Calu3 (cell line): ENCODE measurements at regions of chr3 and their contacts with region 1.

Region 1: GRCh38 chr3:172595641-172596393 is 72.6 kb upstream of the TNFSF10 start:
- DNase-seq: peak; percentile 67
- H3K4me3 Mint-ChIP-seq: peak overlapping the region; percentile 70
- H3K27ac Mint-ChIP-seq: peak overlapping the region; percentile 95
- H3K4me1 Mint-ChIP-seq: peaks cover 68% of the 10 kb centered on the region
- H3K27me3 Mint-ChIP-seq: no peaks in the 10 kb centered on the region
- CTCF ChIP-seq: peak; percentile 83

Region 2: GRCh38 chr3:172461530-172462138 is 134.2 kb before region 1 on chr3:
- CTCF ChIA-PET with region 1: interaction called, 23 read pairs
- intact Hi-C with region 1: no loop called
- DNase-seq: no peak
- H3K4me3 Mint-ChIP-seq: no peak overlapping the region
- H3K27ac Mint-ChIP-seq: no peak overlapping the region
- H3K4me1 Mint-ChIP-seq: peaks cover 20% of the 10 kb centered on the region
- H3K27me3 Mint-ChIP-seq: no peaks in the 10 kb centered on the region
- CTCF ChIP-seq: peak; percentile 97

Region 3: DNA sequence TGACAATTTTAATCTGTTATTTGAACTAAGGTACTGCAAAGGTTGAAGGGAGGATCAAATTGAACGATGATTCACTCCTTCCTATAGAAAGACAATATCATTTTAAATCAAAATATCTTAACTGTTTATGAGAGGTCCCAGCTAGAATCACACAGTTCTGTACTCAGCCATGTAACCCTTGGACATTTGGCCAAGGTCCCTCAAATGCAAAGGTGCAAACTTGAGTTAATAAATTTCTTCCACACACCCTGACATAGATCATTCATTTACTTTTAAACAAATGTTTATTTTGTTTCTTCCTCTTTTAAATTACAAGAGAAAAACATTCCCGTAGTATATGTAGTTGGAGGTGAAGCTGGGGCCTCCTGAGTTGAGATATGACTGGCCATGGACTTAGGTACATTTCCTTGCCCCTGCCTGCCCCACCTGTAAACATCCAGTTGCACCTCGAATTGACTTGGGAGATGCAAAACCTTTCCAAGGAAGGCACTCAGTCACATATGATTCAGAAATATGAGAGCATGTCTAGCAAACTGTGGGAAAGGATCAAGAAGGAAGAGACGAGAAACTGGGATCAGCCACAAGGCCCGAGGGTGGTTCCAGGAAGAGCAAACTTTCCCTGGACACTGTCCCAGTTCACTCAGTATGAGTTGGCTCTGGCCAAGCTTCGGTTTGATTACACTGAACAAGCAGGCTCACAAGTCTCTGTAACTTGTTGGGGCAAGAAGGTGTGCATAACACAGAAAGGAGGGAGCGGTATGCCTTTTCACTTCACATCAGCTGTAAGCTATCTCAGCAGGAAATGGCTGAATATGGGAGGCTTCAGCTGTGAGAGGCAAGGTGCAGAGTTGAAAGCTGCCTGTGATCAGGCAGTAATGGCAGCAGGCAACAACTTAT is 79.3 kb before region 1 on chr3:
- CTCF ChIA-PET with region 1: interaction called, 36 read pairs
- intact Hi-C with region 1: no loop called
- DNase-seq: peak; percentile 60
- H3K4me3 Mint-ChIP-seq: peak overlapping the region; percentile 12
- H3K27ac Mint-ChIP-seq: peak overlapping the region; percentile 63
- H3K4me1 Mint-ChIP-seq: peaks cover 42% of the 10 kb centered on the region
- H3K27me3 Mint-ChIP-seq: no peaks in the 10 kb centered on the region
- CTCF ChIP-seq: no peak

Region 4: GRCh38 chr3:172546628-172547214 is 49.1 kb before region 1 on chr3:
- CTCF ChIA-PET with region 1: interaction called, 18 read pairs
- intact Hi-C with region 1: loop called (anchors 5 kb)
- DNase-seq: no peak
- H3K4me3 Mint-ChIP-seq: peak overlapping the region; percentile 16
- H3K27ac Mint-ChIP-seq: peak overlapping the region; percentile 82
- H3K4me1 Mint-ChIP-seq: peaks cover 42% of the 10 kb centered on the region
- H3K27me3 Mint-ChIP-seq: no peaks in the 10 kb centered on the region
- CTCF ChIP-seq: no peak

Region 5: GRCh38 chr3:172607305-172608121 is 11.7 kb after region 1 on chr3:
- CTCF ChIA-PET with region 1: interaction called, 12 read pairs
- intact Hi-C with region 1: no loop called
- DNase-seq: peak; percentile 60
- H3K4me3 Mint-ChIP-seq: no peak overlapping the region
- H3K27ac Mint-ChIP-seq: peak overlapping the region; percentile 79
- H3K4me1 Mint-ChIP-seq: peaks cover 34% of the 10 kb centered on the region
- H3K27me3 Mint-ChIP-seq: no peaks in the 10 kb centered on the region
- CTCF ChIP-seq: no peak

Region 6: GRCh38 chr3:172666873-172667694 is 71.3 kb after region 1 on chr3:
- CTCF ChIA-PET with region 1: interaction called, 20 read pairs
- intact Hi-C with region 1: loop called (anchors 1 kb)
- DNase-seq: peak; percentile 94
- H3K4me3 Mint-ChIP-seq: peak overlapping the region; percentile 51
- H3K27ac Mint-ChIP-seq: peak overlapping the region; percentile 73
- H3K4me1 Mint-ChIP-seq: peaks cover 51% of the 10 kb centered on the region
- H3K27me3 Mint-ChIP-seq: no peaks in the 10 kb centered on the region
- CTCF ChIP-seq: peak; percentile 99

Region 7: GRCh38 chr3:172717493-172718088 is 121.8 kb after region 1 on chr3:
- CTCF ChIA-PET with region 1: no interaction called
- intact Hi-C with region 1: no loop called
- DNase-seq: no peak
- H3K4me3 Mint-ChIP-seq: no peak overlapping the region
- H3K27ac Mint-ChIP-seq: no peak overlapping the region
- H3K4me1 Mint-ChIP-seq: peaks cover 27% of the 10 kb centered on the region
- H3K27me3 Mint-ChIP-seq: no peaks in the 10 kb centered on the region
- CTCF ChIP-seq: no peak